Calu3 (cell line): ENCODE measurements at regions of chr4 and their contacts with region 1.

Region 1: DNA sequence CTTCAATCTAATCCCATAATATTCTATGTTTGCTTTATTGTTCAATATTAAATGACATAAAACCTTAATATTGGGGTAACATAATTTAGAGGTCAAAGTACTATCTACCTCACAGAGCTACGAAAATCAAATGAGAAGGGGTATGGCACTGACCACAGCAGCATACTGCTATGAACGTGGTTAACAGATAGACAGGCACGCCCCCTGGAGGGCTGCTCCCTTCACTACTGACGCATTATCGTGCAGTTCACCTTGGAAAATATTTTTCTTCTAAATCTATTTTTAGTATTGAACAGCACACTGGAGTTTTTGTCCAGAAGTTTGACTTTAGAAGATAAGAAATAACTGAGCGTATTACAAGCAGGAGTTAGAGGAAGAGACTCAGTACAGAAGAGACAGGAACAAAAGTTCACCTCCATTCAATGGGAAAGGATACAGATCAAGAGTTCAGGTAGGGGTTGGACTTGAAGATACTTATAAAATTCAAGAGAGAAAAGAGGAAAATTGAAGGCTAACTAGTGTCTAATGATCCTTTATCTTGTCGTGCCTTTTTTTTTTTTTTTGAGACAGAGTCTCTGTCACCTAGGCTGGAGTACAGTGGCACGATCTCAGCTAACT is 22.7 kb downstream of the MAP9 start:
- DNase-seq: peak; percentile 70
- H3K4me3 Mint-ChIP-seq: no peak overlapping the region
- H3K27ac Mint-ChIP-seq: no peak overlapping the region
- H3K4me1 Mint-ChIP-seq: no peaks in the 10 kb centered on the region
- H3K27me3 Mint-ChIP-seq: no peaks in the 10 kb centered on the region
- CTCF ChIP-seq: peak; percentile 35

Region 2: GRCh38 chr4:154807042-154807630 is 546.9 kb before region 1 on chr4:
- CTCF ChIA-PET with region 1: no interaction called
- intact Hi-C with region 1: loop called (anchors 5 kb)
- DNase-seq: no peak
- H3K4me3 Mint-ChIP-seq: no peak overlapping the region
- H3K27ac Mint-ChIP-seq: no peak overlapping the region
- H3K4me1 Mint-ChIP-seq: no peaks in the 10 kb centered on the region
- H3K27me3 Mint-ChIP-seq: no peaks in the 10 kb centered on the region
- CTCF ChIP-seq: peak; percentile 48

Region 3: DNA sequence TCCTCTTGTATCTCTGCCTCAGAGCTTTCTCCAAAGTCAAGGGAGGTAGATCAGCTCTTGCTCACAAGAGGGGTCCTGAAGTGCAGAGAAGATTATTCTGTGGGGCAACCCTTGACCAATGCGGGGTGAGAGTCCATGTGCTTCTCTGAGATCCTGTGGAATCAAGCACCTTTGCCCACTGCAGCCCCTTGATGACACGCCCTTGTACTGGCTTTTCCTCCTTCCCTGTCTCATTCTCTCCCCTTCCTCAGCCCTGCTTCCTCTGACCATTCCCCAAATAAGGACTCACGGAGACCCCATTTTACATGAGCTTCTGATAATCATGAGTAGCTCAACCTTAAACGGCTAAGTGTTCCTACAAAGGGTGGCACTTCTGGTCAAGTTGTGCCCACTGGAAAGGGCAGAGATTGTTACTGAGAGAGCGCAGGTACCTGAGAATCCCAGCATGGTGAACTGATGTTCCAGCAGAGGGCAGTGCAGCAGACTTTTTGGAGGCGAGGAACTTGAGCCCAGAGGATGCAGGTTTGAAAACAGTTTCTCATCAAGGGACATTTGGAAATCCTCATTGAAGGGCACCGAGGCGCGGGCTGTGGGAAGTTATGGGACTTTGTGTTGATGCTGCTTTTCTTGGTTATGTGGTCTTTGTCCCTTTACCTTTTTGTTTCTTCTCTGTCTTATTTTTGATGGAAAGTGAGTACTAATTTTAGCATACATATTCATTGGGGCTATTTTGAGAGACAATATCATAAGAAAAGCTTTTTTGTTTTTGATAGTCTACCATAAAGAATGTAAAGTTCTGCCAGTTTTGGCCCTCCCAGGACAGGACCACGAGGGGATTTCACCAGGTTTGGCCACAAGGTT is 371.6 kb before region 1 on chr4:
- CTCF ChIA-PET with region 1: no interaction called
- intact Hi-C with region 1: loop called (anchors 1 kb)
- DNase-seq: peak; percentile 50
- H3K4me3 Mint-ChIP-seq: no peak overlapping the region
- H3K27ac Mint-ChIP-seq: no peak overlapping the region
- H3K4me1 Mint-ChIP-seq: no peaks in the 10 kb centered on the region
- H3K27me3 Mint-ChIP-seq: no peaks in the 10 kb centered on the region
- CTCF ChIP-seq: peak; percentile 36

Region 4: DNA sequence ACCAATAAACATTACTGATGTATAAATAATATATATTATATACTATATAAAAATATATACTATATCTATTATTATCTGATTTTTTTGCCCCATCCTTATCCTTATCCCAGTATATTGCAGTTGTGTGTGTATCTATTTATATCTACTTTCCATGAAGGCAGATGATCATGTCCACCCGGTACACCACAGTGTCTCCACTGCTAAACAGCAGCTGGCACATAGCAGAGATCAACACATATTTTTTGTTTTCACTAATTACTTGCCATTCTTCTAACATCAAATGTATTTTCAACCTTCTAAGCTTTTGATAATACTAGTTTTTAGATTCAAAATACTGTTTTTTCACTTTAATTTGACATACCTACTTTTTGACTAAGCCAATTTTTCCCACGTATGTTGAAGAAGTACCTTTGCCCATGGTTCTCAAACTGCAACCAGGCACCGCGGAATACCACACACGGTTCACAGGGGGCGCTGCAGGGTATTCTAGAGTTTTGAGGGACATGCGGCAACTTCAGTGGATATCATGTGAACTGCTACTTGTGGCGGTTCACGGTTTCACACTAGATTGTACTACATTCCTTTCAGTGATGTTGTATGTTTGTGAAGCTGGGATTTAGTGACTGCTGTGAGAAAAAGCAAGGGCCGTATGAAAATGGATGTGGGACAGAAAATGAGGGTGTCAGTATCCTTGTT is 328.1 kb before region 1 on chr4:
- CTCF ChIA-PET with region 1: no interaction called
- intact Hi-C with region 1: loop called (anchors 1 kb)
- DNase-seq: peak; percentile 36
- H3K4me3 Mint-ChIP-seq: no peak overlapping the region
- H3K27ac Mint-ChIP-seq: no peak overlapping the region
- H3K4me1 Mint-ChIP-seq: no peaks in the 10 kb centered on the region
- H3K27me3 Mint-ChIP-seq: peaks cover under 1% of the 10 kb centered on the region
- CTCF ChIP-seq: no peak

Region 5: GRCh38 chr4:155288999-155289398 is 65.0 kb before region 1 on chr4:
- CTCF ChIA-PET with region 1: no interaction called
- intact Hi-C with region 1: no loop called
- DNase-seq: no peak
- H3K4me3 Mint-ChIP-seq: no peak overlapping the region
- H3K27ac Mint-ChIP-seq: no peak overlapping the region
- H3K4me1 Mint-ChIP-seq: no peaks in the 10 kb centered on the region
- H3K27me3 Mint-ChIP-seq: no peaks in the 10 kb centered on the region
- CTCF ChIP-seq: no peak